K562 (cell line): ENCODE measurements at regions of chr12 and their contacts with region 1.

Region 1: DNA sequence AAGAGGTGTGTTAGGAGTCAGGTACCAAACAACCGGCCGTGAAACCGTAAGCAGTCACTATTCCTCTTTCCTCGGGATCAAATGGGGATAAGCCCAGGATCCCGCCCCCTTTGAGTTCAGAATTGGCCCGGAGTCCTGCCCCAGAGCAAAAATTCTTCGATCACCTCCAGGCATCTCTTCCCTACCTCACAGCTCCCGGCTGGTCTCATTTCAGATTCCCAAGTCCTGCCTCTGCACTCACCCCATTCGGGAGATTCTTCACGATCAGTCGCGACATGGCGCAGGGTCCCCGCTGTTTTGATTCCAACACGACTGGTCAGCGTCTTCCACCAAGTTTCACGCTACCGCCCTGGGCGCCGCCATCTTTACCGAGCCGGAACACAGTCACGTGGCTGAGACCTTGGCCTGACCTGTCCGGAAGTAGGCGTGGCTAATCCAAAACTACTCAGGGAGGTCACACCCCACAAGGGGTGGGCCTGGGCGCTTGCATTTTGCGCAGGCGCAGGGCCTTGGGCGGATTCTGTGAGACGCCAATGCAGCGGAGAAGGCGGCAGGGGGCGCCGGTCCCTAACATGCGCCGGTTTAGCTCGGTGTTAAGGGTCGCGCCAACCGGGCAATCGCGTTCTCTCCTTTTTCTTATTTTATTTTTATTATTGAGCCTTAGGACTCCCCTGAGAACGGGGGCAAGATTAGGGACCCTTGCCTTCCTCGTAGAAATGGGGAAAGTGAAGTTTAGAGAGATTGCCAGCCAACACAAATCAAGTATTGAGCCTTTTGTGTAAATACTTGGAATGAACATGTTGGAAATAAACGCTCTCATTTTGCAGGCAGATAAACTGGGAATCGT is at the start of gene RBM19:
- DNase-seq: peak; percentile 99
- ATAC-seq: peak; percentile 99
- H3K4me3 ChIP-seq: peak within 1 kb of the TSS; percentile 76
- H3K27ac ChIP-seq: peak within 1 kb of the TSS; percentile 73
- H3K4me1 ChIP-seq: peaks cover 4 to 15% of the 10 kb centered on the region in 2 experiments; a peak in 3 of 5 replicates
- H3K27me3 ChIP-seq: peaks cover 0 to 6% of the 10 kb centered on the region in 2 experiments; a peak in 2 of 5 replicates
- CTCF ChIP-seq: peak; percentile 85 to 95 (median 94)
- EP300 ChIP-seq: peak; percentile 30
- POLR2A ChIP-seq: peak; percentile 83
- RAD21 ChIP-seq: peak; percentile 53 to 66
- polyA plus RNA-seq, gene RBM19: 16.0 to 19.5 TPM

Region 2: GRCh38 chr12:113933201-113933786 is 32.9 kb before region 1 on chr12:
- CTCF ChIA-PET with region 1: no interaction called
- POLR2A ChIA-PET with region 1: no interaction called
- in situ Hi-C with region 1: no loop called
- intact Hi-C with region 1: loop called (anchors 2 kb)
- DNase-seq: peak; percentile 81 to 85 (median 82)
- ATAC-seq: peak; percentile 83
- H3K4me3 ChIP-seq: 0 out of 2 replicates have a peak overlapping the region, but pooled peaks have one; percentile 10
- H3K27ac ChIP-seq: peak overlapping the region; percentile 74
- H3K4me1 ChIP-seq: peaks cover 45 to 49% of the 10 kb centered on the region in 2 experiments
- H3K27me3 ChIP-seq: no peaks in the 10 kb centered on the region
- CTCF ChIP-seq: peak in 2 of 3 experiments; percentile 29 to 40; a peak in 3 of 6 replicates
- EP300 ChIP-seq: no peak; the same call in 1 of the 2 replicates
- POLR2A ChIP-seq: no peak
- RAD21 ChIP-seq: no peak